Mammary epithelial cell (primary cell): ENCODE measurements at regions of chr7 and their contacts with region 1.

Region 1: DNA sequence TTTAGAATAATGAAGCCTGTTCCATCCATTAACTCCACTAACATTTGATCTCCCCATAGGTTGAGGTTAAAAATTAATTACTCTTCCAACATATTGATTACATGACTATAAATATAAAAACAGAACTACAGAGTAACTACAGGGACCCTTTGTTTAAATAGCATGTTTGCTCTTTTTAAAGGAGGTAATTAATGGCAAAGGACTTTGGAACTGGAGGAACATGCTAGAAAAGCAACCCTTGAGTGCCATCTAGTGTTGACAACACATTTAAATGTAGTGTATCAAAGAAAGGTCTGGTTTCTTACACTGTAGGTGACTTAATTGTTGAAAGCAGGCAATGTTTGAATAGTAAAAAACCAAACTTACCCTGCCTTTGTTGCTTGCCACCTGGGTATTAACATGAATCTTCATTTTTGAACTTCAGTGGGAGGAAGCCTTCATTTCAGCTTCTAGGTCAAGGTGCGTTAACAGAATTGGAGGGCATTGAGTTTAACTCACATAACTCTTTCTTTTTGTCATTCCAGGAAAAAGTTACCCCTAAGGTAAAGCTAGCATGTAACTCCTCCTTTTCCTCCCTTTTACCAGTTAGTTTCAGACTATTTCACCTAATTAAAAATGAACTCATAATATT is 52.6 kb upstream of the CAPZA2 start:
- DNase-seq: peak; percentile 56
- H3K4me3 ChIP-seq: no peak overlapping the region
- H3K27ac ChIP-seq: no peak overlapping the region
- H3K4me1 ChIP-seq: peaks cover 3% of the 10 kb centered on the region
- H3K27me3 ChIP-seq: no peaks in the 10 kb centered on the region
- CTCF ChIP-seq: peak; percentile 45 to 65

Region 2: DNA sequence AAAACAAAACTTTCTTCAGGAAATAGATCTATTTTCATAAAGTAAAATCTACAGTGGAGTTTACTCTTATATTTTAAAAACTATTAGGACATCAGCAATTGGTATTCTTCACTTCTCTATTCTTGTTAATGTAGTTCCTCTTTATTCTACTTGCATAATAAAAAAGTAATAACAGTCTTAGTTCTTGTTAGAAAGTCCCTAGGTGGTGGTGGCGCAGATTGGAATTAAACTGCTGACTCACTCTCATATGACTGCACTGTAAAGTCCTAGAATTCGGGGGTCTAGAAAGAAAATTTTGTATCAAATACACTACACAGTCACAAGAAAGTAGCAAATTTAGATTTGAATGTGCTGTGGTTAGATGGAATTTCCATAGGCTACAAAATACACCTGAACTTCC is 644.0 kb before region 1 on chr7:
- CTCF ChIA-PET with region 1: no interaction called
- dilution Hi-C with region 1: loop called (anchors 10 kb)
- in situ Hi-C with region 1: loop called (anchors 10 to 25 kb)
- intact Hi-C with region 1: no loop called
- DNase-seq: no peak
- H3K4me3 ChIP-seq: no peak overlapping the region
- H3K27ac ChIP-seq: no peak overlapping the region
- H3K4me1 ChIP-seq: no peaks in the 10 kb centered on the region
- H3K27me3 ChIP-seq: no peaks in the 10 kb centered on the region
- CTCF ChIP-seq: no peak

Region 3: GRCh38 chr7:116834815-116835533 is 25.2 kb after region 1 on chr7:
- CTCF ChIA-PET with region 1: no interaction called
- dilution Hi-C with region 1: no loop called
- in situ Hi-C with region 1: no loop called
- intact Hi-C with region 1: no loop called
- DNase-seq: peak; percentile 87
- H3K4me3 ChIP-seq: no peak overlapping the region
- H3K27ac ChIP-seq: no peak overlapping the region
- H3K4me1 ChIP-seq: peaks cover 12% of the 10 kb centered on the region
- H3K27me3 ChIP-seq: no peaks in the 10 kb centered on the region
- CTCF ChIP-seq: no peak